Right ventricle myocardium inferior (tissue), 1 donor: ENCODE measurements at regions of chr2 and their contacts with region 1.

Region 1: DNA sequence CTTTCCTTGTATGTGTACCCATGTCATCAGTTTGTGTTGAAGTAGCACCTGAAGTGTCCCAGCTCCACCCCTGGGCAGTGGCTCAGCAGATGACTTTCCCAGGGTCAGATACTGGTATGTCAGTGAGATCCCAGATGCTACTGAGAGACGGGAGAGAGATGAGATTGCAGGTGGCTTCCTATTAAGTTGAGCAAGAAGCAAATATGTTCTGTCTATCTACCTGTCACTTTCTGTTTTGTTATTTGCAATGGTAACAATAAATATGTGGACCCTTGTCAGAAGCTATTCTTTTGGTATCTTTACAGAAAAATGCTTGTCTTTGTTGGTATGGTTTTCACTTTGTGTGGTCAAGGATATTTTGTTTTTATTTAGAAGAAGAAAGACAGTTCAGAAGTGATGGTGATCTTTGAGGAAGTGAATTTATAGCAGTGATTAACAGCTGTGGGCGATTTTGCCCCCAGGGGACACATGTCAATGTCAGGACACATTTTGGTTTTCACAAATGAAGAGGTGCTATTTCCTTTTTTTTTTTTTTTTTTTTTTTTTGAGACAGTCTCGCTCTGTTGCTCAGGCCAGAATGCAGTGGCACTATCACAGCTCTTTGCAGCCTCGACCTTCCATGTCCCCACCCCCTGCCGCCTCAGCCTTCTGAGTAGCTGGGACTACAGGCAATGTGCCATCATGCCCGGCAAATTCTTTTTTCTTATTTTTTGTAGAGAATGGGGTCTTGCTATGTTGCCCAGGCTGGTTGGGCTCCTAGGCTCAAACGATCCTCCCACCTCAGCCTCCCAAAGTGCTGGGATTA is 21.4 kb downstream of the MGAT5 start:
- DNase-seq: no peak
- ATAC-seq: no peak

Region 2: DNA sequence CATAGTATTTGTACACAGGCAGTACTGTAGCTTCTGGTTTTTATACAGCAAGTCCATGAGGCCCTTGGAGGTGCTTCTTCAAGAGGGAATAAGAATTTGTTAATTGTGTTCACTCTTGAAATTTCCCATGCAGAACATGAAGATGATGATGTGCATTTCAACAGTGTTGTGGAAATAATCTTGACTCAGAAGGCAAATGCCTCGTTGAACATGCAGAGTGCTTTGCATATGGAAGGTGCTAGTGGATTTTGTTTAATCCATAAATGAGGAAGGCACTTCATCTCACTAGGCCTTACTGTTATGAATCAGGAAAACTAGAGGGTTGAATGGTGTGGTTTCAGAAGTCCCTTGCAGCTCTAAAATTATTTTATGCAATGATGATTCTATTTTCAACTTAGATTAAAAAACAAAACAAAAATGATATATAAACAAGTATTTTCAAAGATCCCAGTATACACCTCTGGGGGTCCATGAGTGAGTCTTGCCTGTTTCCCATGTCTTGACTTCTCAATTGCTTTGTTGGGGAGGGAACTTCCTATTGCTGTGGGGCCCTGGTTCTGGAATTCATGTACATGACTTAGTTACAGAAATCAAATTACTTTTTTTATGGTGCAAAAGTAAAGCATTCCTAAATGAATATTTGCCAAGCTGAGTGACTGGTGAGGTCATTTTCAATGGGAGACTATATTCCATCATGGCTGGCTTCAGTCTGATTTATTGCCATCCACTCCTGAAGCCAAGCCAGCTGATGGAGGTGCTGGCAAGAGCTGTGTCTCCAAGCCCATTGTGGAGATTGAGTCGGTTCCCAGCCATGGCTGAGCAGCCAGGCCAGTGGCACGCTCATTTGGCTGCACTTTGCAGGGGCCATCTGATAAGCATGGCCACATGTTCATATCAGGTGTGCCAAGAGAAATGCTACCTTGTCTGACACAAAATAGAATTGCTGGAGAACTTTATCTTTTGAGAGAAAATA is 35.1 kb after region 1 on chr2:
- intact Hi-C with region 1: loop called (anchors 5 kb)
- DNase-seq: no peak
- ATAC-seq: no peak